Activated CD4-positive, alpha-beta memory T cell treated with anti-CD3 and anti-CD28 coated beads, Interleukin-2, amount 10 ng/mL, durations not matched to agents 7 days and 5 days (primary cell): ENCODE measurements at regions of chr5 and their contacts with region 1.

Region 1: DNA sequence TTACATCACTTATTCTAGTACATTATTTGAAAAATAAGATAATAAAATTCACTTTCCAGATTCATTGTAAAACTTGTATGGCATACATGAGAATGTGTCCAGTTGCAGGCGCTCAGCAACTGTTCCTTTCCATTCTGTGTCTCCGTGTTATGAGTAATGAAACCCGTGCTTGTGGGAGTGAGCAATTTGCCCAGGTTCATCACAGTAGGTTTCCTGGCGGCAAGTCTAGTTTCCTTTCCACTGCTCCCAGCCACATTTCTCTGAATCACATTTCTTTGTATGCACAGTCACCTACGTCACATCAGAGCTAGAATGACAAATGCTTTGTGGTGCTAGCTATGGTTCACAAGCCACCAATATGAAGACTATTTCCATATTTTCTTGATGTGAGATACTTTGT is 39.9 kb downstream of the MOCS2 start:
- DNase-seq: peak; percentile 82
- H3K4me3 Mint-ChIP-seq: peak overlapping the region; percentile 1
- H3K27ac Mint-ChIP-seq: peak overlapping the region; percentile 70
- H3K4me1 Mint-ChIP-seq: peaks cover 29% of the 10 kb centered on the region
- H3K27me3 Mint-ChIP-seq: no peaks in the 10 kb centered on the region

Region 2: DNA sequence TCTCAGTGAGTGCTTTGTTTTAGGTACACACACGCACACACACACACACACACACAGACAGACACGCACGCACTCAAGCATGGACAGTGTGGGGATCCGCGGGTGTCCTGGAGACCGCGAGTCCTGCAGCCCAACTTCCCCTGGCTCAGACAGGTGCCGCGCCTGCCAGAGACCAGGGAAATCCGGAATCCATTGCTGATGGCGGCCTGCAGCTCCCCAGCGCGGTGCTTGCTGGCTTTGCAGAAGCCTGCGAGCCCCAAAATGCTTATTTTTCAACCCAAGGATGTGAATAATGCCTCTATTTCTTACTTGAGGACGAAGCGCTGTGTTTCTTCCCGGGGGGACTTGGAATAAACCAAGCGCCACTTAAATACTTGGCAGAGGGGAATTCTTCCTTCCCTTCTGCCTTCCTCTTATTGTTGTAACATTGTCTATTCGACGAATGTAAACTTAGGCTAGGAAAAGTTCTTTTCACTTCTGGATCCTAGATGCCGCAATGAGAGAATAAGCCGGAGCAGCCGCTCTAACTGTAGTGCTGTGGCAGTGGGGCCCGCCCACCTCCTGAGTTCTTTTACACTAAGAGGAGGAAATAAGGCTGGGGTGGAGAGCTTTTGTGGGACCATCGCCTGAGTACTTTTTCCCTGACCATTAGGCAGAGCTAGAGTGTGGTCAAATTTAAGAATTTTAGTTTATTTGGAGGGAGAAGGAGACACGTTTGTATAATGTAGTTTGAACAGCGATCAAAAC is 79.7 kb before region 1 on chr5:
- CTCF ChIA-PET with region 1: interaction called, 5 read pairs
- POLR2A ChIA-PET with region 1: interaction called, 11 read pairs
- DNase-seq: peak; percentile 54
- H3K4me3 Mint-ChIP-seq: peak overlapping the region; percentile 79
- H3K27ac Mint-ChIP-seq: peak overlapping the region; percentile 17
- H3K4me1 Mint-ChIP-seq: peaks cover 57% of the 10 kb centered on the region
- H3K27me3 Mint-ChIP-seq: peaks cover 19% of the 10 kb centered on the region

Region 3: GRCh38 chr5:53089345-53089991 is 19.8 kb after region 1 on chr5:
- CTCF ChIA-PET with region 1: interaction called, 13 read pairs
- POLR2A ChIA-PET with region 1: interaction called, 8 read pairs
- DNase-seq: no peak
- H3K4me3 Mint-ChIP-seq: peak overlapping the region; percentile 19
- H3K27ac Mint-ChIP-seq: peak overlapping the region; percentile 54
- H3K4me1 Mint-ChIP-seq: peaks cover 31% of the 10 kb centered on the region
- H3K27me3 Mint-ChIP-seq: peaks cover 5% of the 10 kb centered on the region